GM12878 (cell line): ENCODE measurements at regions of chr19 and their contacts with region 1.

Region 1: GRCh38 chr19:7333198-7334118 is 15.3 kb upstream of the ARHGEF18 start:
- DNase-seq: peak; percentile 92
- ATAC-seq: peak; percentile 60
- H3K4me3 ChIP-seq: no peak overlapping the region
- H3K27ac ChIP-seq: peak overlapping the region; percentile 75
- H3K4me1 ChIP-seq: peaks cover 37% of the 10 kb centered on the region
- H3K27me3 ChIP-seq: no peaks in the 10 kb centered on the region
- CTCF ChIP-seq: no peak
- EP300 ChIP-seq: peak; percentile 9 to 26; a peak in 1 of 4 replicates
- POLR2A ChIP-seq: no peak
- RAD21 ChIP-seq: no peak

Region 2: DNA sequence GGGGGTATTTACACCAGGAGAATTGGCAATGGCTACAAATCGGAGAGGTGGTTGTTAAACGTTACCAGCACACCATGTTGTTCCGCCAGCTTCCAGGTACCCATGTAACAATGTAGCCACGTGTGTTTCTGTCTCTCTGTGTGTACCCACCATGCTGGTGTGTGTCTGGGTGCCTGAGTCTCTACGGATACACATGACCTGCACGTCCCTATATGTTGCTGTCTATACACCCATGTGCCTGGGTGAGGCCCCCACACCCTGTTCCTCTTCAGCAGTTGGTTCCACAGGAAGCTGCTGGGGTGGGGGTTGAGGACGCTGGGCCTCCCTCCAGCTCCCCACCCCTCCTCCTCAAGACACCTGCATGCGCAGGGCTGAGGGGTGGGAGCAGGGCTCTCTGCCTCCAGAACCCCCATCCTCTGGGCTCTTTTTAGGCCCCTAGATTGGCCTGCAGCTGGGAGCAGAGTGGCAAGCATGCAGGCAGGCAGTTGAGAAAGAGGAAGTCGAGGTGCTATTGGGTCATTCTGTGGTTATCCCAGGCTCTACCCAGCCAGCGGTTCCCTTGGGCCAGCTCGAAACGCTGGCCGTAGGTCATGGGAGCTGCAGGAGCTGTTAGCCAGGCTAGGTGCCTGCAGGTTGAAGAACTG is 15.3 kb after region 1 on chr19 and contains the start of gene ARHGEF18:
- CTCF ChIA-PET with region 1: interaction called, 23 read pairs
- POLR2A ChIA-PET with region 1: interaction called, 12 read pairs
- RAD21 ChIA-PET with region 1: interaction called, 21 read pairs
- SMC1A ChIA-PET with region 1: interaction called, 22 read pairs
- in situ Hi-C with region 1: no loop called
- intact Hi-C with region 1: no loop called
- DNase-seq: peak; percentile 59
- ATAC-seq: peak; percentile 60
- H3K4me3 ChIP-seq: peak within 1 kb of the TSS; percentile 43; the same call in 1 of the 2 replicates
- H3K27ac ChIP-seq: peak within 1 kb of the TSS; percentile 77
- H3K4me1 ChIP-seq: peaks cover 58% of the 10 kb centered on the region
- H3K27me3 ChIP-seq: no peaks in the 10 kb centered on the region
- CTCF ChIP-seq: no peak
- EP300 ChIP-seq: peak in 1 of 2 experiments; percentile 36; a peak in 1 of 4 replicates
- POLR2A ChIP-seq: peak; percentile 72; the same call in 1 of the 2 replicates
- RAD21 ChIP-seq: no peak
- polyA plus RNA-seq, gene ARHGEF18: 0.31 to 0.57 TPM

Region 3: GRCh38 chr19:7460562-7460966 is 127.1 kb after region 1 on chr19:
- CTCF ChIA-PET with region 1: no interaction called
- POLR2A ChIA-PET with region 1: no interaction called
- RAD21 ChIA-PET with region 1: no interaction called
- SMC1A ChIA-PET with region 1: no interaction called
- in situ Hi-C with region 1: no loop called
- intact Hi-C with region 1: no loop called
- DNase-seq: no peak
- ATAC-seq: no peak
- H3K4me3 ChIP-seq: no peak overlapping the region
- H3K27ac ChIP-seq: no peak overlapping the region
- H3K4me1 ChIP-seq: no peaks in the 10 kb centered on the region
- H3K27me3 ChIP-seq: no peaks in the 10 kb centered on the region
- CTCF ChIP-seq: no peak
- EP300 ChIP-seq: no peak
- POLR2A ChIP-seq: no peak
- RAD21 ChIP-seq: no peak

Region 4: GRCh38 chr19:7488736-7489353 is 155.4 kb after region 1 on chr19 and contains the start of gene PEX11G:
- CTCF ChIA-PET with region 1: no interaction called
- POLR2A ChIA-PET with region 1: no interaction called
- RAD21 ChIA-PET with region 1: no interaction called
- SMC1A ChIA-PET with region 1: no interaction called
- in situ Hi-C with region 1: no loop called
- intact Hi-C with region 1: no loop called
- DNase-seq: peak; percentile 36
- ATAC-seq: peak; percentile 97
- H3K4me3 ChIP-seq: peak within 1 kb of the TSS; percentile 62
- H3K27ac ChIP-seq: no peak within 1 kb of the TSS
- H3K4me1 ChIP-seq: no peaks in the 10 kb centered on the region; the same call in 1 of the 2 replicates
- H3K27me3 ChIP-seq: no peaks in the 10 kb centered on the region
- CTCF ChIP-seq: no peak
- EP300 ChIP-seq: no peak
- POLR2A ChIP-seq: peak; percentile 76
- RAD21 ChIP-seq: no peak
- polyA plus RNA-seq, gene PEX11G: 0.05 TPM in 1 of 2 experiments, not detected in the other